ENCODE measurements at regions of chr16 and their contacts with region 1.

Region 1: GRCh38 chr16:81940781-81941560 is 70.3 kb downstream of the SDR42E1 start:
- DNase-seq: peak; percentile 70
- H3K4me3 ChIP-seq: no peak overlapping the region
- H3K27ac ChIP-seq: no peak overlapping the region
- H3K4me1 ChIP-seq: no peaks in the 10 kb centered on the region
- H3K27me3 ChIP-seq: no peaks in the 10 kb centered on the region
- CTCF ChIP-seq: peak; percentile 37 to 47
- POLR2A ChIP-seq: no peak

Region 2: DNA sequence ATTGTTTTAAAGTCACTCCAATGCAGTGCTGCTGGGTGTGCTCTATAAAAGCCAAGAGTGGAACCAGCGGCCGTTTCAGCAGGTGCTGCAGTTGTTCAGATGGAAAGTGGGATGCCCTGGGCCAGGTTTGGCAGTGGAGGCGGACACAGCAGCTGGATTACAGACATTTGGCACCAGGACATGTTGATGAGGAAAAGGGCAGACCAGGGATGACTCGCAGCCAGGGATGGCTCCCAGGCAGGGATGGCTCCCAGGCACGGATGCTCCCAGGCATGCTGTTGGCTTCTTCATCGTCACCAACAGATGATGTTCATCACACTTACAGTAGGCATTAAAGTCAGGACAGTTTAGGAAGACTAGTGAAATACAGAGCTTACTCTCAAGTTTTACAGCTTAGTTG is 616.2 kb before region 1 on chr16:
- CTCF ChIA-PET with region 1: no interaction called
- POLR2A ChIA-PET with region 1: no interaction called
- dilution Hi-C with region 1: no loop called
- intact Hi-C with region 1: no loop called
- DNase-seq: no peak
- H3K4me3 ChIP-seq: no peak overlapping the region
- H3K27ac ChIP-seq: no peak overlapping the region
- H3K4me1 ChIP-seq: no peaks in the 10 kb centered on the region
- H3K27me3 ChIP-seq: no peaks in the 10 kb centered on the region
- CTCF ChIP-seq: no peak
- POLR2A ChIP-seq: no peak

Region 3: GRCh38 chr16:81885976-81886586 is 54.9 kb before region 1 on chr16:
- CTCF ChIA-PET with region 1: interaction called, 14 read pairs
- POLR2A ChIA-PET with region 1: no interaction called
- dilution Hi-C with region 1: no loop called
- intact Hi-C with region 1: loop called (anchors 1 kb)
- DNase-seq: peak; percentile 40
- H3K4me3 ChIP-seq: no peak overlapping the region
- H3K27ac ChIP-seq: no peak overlapping the region
- H3K4me1 ChIP-seq: no peaks in the 10 kb centered on the region
- H3K27me3 ChIP-seq: no peaks in the 10 kb centered on the region
- CTCF ChIP-seq: peak; percentile 73 to 78
- POLR2A ChIP-seq: no peak

Region 4: DNA sequence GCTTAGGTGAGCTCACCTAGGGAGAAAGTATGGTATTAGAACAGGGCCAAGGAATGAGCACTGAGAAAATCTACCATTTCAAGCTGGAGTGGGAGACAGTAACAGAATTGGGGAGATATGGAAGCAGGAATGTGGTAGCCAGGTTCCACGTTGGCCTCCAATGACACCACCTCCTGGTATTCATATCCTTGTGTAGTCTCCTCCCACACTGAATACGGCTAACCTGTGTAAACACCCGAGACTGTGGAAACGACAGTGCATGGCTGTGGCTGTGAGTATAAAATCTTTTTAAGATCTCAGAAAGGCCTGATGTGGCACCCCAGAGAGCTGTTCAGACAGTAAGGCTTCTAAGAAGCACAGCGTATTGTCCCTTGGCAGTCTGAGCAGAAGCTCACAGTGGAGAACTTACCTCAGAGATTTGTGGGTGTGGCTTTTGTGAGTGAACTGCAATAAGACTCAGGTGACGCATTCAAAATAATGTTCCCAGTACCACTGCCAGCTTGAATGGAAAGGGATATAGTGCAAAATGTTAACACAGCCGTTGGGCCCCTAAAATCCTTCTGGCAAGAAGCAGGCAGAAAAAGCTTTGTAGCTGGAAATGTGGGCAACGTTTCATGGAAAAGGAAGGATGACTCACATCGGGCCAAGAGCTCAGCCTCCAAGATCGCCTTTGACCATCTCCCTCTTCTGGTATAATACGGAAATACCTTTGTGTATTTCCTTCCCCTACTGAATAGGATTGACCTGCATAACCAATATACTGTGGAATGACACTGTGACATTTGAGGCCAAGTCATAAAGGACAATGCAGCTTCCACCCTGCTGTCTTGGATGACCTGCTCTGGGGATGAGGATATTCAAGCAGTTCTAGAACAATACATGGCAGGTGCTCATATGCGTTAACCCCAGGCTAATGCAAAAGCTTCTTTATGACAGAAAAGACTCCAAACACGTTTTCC is 56.0 kb after region 1 on chr16:
- CTCF ChIA-PET with region 1: interaction called, 54 read pairs
- POLR2A ChIA-PET with region 1: no interaction called
- dilution Hi-C with region 1: no loop called
- intact Hi-C with region 1: loop called (anchors 1 kb)
- DNase-seq: peak; percentile 90
- H3K4me3 ChIP-seq: peak overlapping the region in 1 of 3 experiments; percentile 33
- H3K27ac ChIP-seq: peak overlapping the region; percentile 96
- H3K4me1 ChIP-seq: peaks cover 41% of the 10 kb centered on the region
- H3K27me3 ChIP-seq: no peaks in the 10 kb centered on the region
- CTCF ChIP-seq: peak; percentile 34 to 39
- POLR2A ChIP-seq: no peak

Region 5: GRCh38 chr16:82061861-82062525 is 121.0 kb after region 1 on chr16:
- CTCF ChIA-PET with region 1: interaction called, 77 read pairs
- POLR2A ChIA-PET with region 1: no interaction called
- dilution Hi-C with region 1: no loop called
- intact Hi-C with region 1: loop called (anchors 1 kb)
- DNase-seq: peak; percentile 55
- H3K4me3 ChIP-seq: no peak overlapping the region
- H3K27ac ChIP-seq: no peak overlapping the region
- H3K4me1 ChIP-seq: no peaks in the 10 kb centered on the region
- H3K27me3 ChIP-seq: peaks cover 11 to 20% of the 10 kb centered on the region in 2 experiments
- CTCF ChIP-seq: peak; percentile 51 to 59
- POLR2A ChIP-seq: no peak

Region 6: DNA sequence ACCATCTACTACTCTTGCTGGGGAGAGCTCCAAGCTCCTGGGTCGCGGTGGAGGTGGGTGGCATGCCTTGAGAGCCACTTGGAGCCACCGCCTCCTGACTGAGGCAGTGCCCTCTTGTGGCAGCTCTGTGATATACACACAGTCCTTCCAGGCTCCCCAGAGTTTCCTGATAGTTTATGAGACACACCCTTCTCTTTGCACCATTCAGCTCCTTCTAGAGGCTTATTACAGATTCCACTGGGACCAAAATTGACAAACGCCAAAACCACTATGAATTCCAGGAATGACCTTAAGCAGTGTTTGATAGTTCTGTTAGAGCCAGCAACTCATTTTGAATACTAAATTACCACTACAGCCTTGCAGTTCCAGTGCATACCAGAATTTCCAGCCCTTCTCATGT is 515.7 kb after region 1 on chr16:
- CTCF ChIA-PET with region 1: interaction called, 5 read pairs
- POLR2A ChIA-PET with region 1: no interaction called
- dilution Hi-C with region 1: no loop called
- intact Hi-C with region 1: loop called (anchors 10 kb)
- DNase-seq: peak; percentile 62
- H3K4me3 ChIP-seq: no peak overlapping the region
- H3K27ac ChIP-seq: no peak overlapping the region
- H3K4me1 ChIP-seq: no peaks in the 10 kb centered on the region
- H3K27me3 ChIP-seq: peaks cover 0 to 8% of the 10 kb centered on the region in 2 experiments
- CTCF ChIP-seq: peak; percentile 80 to 89
- POLR2A ChIP-seq: no peak